ENCODE measurements at regions of chr17 and their contacts with region 1.

Region 1: DNA sequence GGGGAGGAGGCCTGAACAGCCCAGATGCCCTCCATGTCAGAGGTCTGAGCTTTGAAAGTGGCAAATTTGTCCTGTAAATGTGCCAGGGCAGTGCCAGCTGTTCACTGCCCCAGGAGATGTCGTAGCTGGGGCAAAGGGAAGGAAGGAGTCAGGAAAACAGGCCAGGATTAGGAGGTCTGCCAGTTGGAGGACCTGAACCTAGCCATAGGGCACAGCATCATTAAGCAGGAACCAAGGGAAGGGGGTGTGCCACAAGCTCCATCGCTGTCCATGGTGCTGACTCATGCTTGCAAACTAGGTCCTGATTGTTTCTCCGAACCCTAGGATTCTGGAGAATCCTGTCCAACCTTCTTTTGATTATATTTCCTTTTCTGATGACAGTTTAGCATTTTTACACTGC is 124.2 kb downstream of the TMEM132E start:
- DNase-seq: no peak
- ATAC-seq: no peak
- H3K4me3 ChIP-seq: no peak overlapping the region
- H3K27ac ChIP-seq: no peak overlapping the region
- H3K4me1 ChIP-seq: no peaks in the 10 kb centered on the region
- H3K27me3 ChIP-seq: no peaks in the 10 kb centered on the region
- CTCF ChIP-seq: no peak
- EP300 ChIP-seq: no peak
- POLR2A ChIP-seq: no peak
- RAD21 ChIP-seq: no peak

Region 2: GRCh38 chr17:34756637-34757021 is 53.1 kb after region 1 on chr17:
- CTCF ChIA-PET with region 1: no interaction called
- POLR2A ChIA-PET with region 1: no interaction called
- RAD21 ChIA-PET with region 1: no interaction called
- SMC1A ChIA-PET with region 1: no interaction called
- in situ Hi-C with region 1: no loop called
- intact Hi-C with region 1: loop called (anchors 10 kb)
- DNase-seq: no peak
- ATAC-seq: no peak
- H3K4me3 ChIP-seq: no peak overlapping the region
- H3K27ac ChIP-seq: no peak overlapping the region
- H3K4me1 ChIP-seq: no peaks in the 10 kb centered on the region
- H3K27me3 ChIP-seq: peaks cover 0 to 1% of the 10 kb centered on the region in 2 experiments; a peak in 1 of 4 replicates
- CTCF ChIP-seq: no peak
- EP300 ChIP-seq: no peak
- POLR2A ChIP-seq: no peak
- RAD21 ChIP-seq: no peak